Activated CD4-positive, alpha-beta memory T cell treated with anti-CD3 and anti-CD28 coated beads, Interleukin-2, amount 10 ng/mL, durations not matched to agents 7 days and 5 days (primary cell): ENCODE measurements at regions of chr19 and their contacts with region 1.

Region 1: DNA sequence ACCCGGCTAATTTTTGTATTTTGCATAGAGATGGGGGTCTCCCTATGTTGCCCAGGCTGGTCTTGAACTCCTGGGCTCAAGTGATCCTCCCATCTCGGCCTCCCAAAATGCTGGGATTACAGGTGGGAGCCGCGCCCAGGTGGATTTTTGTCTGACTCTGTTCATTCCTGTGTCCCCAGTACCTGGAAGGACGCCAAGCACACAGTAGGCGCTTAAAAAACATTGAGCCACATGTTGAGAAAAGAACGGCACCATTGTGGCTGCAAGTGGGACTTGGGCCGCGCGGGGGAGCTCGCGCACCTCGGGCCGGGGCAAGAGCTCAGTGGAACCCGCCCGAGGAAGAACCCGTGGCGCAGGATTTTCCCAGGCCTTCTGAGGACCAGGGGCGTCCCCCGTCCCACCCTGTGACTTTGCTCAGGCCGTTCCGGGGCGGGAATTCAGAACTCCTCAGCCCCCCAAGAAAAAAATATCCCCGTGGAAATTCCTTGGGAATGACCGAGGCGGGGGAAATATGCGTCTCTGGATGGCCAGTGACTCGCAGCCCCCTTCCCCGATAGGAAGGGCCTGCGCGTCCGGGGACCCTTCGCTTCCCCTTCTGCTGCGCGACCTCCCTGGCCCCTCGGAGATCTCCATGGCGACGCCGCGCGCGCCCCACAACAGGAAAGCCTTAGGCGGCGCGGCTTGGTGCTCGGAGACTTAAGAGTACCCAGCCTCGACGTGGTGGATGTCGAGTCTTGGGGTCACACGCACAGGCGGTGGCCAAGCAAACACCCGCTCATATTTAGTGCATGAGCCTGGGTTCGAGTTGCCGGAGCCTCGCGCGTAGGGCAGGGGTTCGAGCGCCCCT is 1.4 kb upstream of the ICAM1 start:
- DNase-seq: peak; percentile 91
- H3K4me3 Mint-ChIP-seq: peak overlapping the region; percentile 83
- H3K27ac Mint-ChIP-seq: peak overlapping the region; percentile 93
- H3K4me1 Mint-ChIP-seq: peaks cover 45% of the 10 kb centered on the region
- H3K27me3 Mint-ChIP-seq: peaks cover 1% of the 10 kb centered on the region

Region 2: GRCh38 chr19:10135551-10136334 is 133.8 kb before region 1 on chr19:
- CTCF ChIA-PET with region 1: no interaction called
- POLR2A ChIA-PET with region 1: no interaction called
- DNase-seq: no peak
- H3K4me3 Mint-ChIP-seq: no peak overlapping the region
- H3K27ac Mint-ChIP-seq: no peak overlapping the region
- H3K4me1 Mint-ChIP-seq: no peaks in the 10 kb centered on the region
- H3K27me3 Mint-ChIP-seq: no peaks in the 10 kb centered on the region

Region 3: DNA sequence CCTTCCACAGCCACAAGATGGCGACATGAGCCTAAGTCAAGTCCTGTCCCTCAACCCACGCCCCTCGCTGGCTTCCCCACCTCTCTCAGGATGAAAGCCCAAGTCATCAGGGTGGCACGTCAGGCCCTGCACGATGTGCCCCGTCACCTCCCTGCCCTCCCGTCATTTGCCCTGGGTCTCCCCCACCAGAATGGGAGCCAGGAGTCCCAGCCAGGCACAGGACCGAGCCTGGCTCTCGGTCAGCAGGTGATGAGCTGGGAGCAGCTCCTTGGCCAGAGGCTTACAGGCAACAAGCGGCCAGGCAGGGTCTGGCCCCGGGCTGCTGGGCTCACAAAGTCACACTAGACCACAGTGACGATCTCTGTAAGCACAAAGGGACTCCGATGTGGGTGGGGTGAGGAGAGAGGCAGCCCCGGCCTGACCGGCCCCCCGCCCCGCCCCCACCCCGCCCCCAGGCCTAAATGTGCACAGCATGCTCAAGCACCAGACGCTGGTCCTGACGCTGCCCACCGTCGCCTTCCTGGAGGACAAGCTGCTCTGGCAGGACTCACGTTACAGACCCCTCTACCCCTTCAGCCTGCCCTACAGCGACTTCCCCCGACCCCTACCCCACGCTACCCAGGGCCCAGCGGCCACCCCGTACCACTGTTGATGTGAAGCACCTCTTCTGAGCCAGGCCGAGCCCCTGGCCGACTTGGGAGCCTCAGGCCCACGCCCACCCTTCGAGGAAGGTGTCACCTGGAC is 10.2 kb before region 1 on chr19:
- CTCF ChIA-PET with region 1: interaction called, 98 read pairs
- POLR2A ChIA-PET with region 1: interaction called, 46 read pairs
- DNase-seq: peak; percentile 94
- H3K4me3 Mint-ChIP-seq: no peak overlapping the region
- H3K27ac Mint-ChIP-seq: peak overlapping the region; percentile 84
- H3K4me1 Mint-ChIP-seq: peaks cover 34% of the 10 kb centered on the region
- H3K27me3 Mint-ChIP-seq: no peaks in the 10 kb centered on the region

Region 4: DNA sequence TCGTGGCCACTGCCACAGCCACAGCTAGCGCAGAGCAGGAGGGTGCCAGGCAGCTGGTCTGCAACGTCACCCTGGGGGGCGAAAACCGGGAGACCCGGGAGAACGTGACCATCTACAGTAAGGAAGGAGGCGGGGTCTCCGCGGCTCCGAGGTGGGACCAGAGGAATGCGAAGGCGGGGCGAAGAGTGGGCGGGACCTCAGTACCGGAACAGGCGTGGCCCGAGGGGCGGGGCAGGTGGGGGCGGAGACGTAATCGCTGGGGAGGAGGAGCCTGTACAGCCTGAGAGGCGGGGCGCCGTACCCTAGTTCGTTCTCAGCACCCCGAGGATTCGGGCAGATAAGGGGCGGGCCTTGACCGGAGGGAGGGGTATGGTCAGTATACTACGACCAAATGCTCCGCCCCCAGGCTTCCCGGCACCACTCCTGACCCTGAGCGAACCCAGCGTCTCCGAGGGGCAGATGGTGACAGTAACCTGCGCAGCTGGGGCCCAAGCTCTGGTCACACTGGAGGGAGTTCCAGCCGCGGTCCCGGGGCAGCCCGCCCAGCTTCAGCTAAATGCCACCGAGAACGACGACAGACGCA is 22.7 kb after region 1 on chr19:
- CTCF ChIA-PET with region 1: interaction called, 28 read pairs
- POLR2A ChIA-PET with region 1: interaction called, 105 read pairs
- DNase-seq: peak; percentile 80
- H3K4me3 Mint-ChIP-seq: peak overlapping the region; percentile 65
- H3K27ac Mint-ChIP-seq: peak overlapping the region; percentile 56
- H3K4me1 Mint-ChIP-seq: peaks cover 73% of the 10 kb centered on the region
- H3K27me3 Mint-ChIP-seq: peaks cover 82% of the 10 kb centered on the region

Region 5: GRCh38 chr19:10380313-10381102 is 111.0 kb after region 1 on chr19 and contains the start of gene TYK2:
- CTCF ChIA-PET with region 1: interaction called, 26 read pairs
- POLR2A ChIA-PET with region 1: interaction called, 29 read pairs
- DNase-seq: peak; percentile 95
- H3K4me3 Mint-ChIP-seq: peak within 1 kb of the TSS; percentile 95
- H3K27ac Mint-ChIP-seq: peak within 1 kb of the TSS; percentile 90
- H3K4me1 Mint-ChIP-seq: peaks cover 27% of the 10 kb centered on the region
- H3K27me3 Mint-ChIP-seq: no peaks in the 10 kb centered on the region
- total RNA-seq, gene TYK2: 226 to 243 TPM

Region 6: DNA sequence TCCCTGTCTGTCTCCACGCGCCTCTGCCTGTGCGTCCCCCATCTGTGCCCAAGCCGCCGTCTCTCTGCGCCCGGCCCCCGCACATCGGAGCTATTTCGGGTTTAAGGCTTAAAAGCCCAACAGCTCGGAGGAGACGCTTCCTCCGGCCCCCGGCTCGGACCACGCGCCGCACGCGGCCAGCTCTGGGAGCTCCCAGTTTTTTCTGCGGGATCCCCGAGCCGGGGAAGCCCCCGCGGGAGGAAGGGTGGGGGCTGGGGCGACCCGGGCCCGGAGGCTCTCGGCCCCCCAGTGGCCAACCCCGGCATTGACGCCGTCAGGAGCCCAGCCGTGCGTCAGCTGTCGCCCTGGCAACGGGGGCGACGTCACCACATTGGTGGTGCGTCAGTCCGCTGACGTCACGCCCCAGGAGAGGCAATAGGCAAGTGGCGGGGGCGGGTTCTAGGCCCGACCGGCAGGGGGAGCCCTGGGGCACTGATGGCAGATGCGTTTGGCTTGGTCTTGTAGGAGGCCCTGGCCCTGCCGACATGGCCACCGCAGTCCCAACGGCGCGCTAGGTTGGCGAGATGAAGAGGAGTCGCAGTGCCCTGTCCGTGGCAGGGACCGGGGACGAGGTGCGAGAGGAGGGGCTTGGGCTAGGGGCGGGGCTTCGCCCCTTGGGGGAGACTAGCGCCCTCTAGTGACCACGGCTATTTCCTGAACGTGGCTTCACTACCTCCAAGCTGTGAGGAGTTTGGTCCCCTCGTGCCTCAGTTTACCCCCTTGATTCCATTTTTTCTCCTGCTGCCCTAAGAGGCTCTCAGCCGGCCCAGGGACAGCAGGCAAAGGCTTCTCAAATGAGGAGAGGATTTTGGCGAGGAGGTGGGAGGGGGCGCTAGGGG is 147.1 kb after region 1 on chr19:
- CTCF ChIA-PET with region 1: interaction called, 9 read pairs
- POLR2A ChIA-PET with region 1: interaction called, 11 read pairs
- DNase-seq: peak; percentile 98
- H3K4me3 Mint-ChIP-seq: peak overlapping the region; percentile 73
- H3K27ac Mint-ChIP-seq: peak overlapping the region; percentile 88
- H3K4me1 Mint-ChIP-seq: peaks cover 74% of the 10 kb centered on the region
- H3K27me3 Mint-ChIP-seq: peaks cover 19% of the 10 kb centered on the region

Region 7: GRCh38 chr19:10565567-10566407 is 296.2 kb after region 1 on chr19 and contains the start of gene KRI1:
- CTCF ChIA-PET with region 1: interaction called, 3 read pairs
- POLR2A ChIA-PET with region 1: interaction called, 10 read pairs
- DNase-seq: peak; percentile 100
- H3K4me3 Mint-ChIP-seq: peak within 1 kb of the TSS; percentile 92
- H3K27ac Mint-ChIP-seq: peak within 1 kb of the TSS; percentile 97
- H3K4me1 Mint-ChIP-seq: peaks cover 38% of the 10 kb centered on the region
- H3K27me3 Mint-ChIP-seq: no peaks in the 10 kb centered on the region
- total RNA-seq, gene KRI1: 45.5 TPM